K562 (cell line): ENCODE measurements at regions of chr16 and their contacts with region 1.

Region 1: GRCh38 chr16:9597967-9598730 is 506.7 kb downstream of the HAPSTR1 start:
- DNase-seq: peak; percentile 22 to 78 (median 54)
- ATAC-seq: peak; percentile 90
- H3K4me3 ChIP-seq: no peak overlapping the region
- H3K27ac ChIP-seq: peak overlapping the region; percentile 88
- H3K4me1 ChIP-seq: peaks cover 4 to 56% of the 10 kb centered on the region in 2 experiments; a peak in 4 of 5 replicates
- H3K27me3 ChIP-seq: no peaks in the 10 kb centered on the region
- CTCF ChIP-seq: no peak
- EP300 ChIP-seq: peak; percentile 97
- POLR2A ChIP-seq: peak; percentile 42; the same call in 1 of the 2 replicates
- RAD21 ChIP-seq: peak; percentile 19 to 30; a peak in 2 of 4 replicates

Region 2: DNA sequence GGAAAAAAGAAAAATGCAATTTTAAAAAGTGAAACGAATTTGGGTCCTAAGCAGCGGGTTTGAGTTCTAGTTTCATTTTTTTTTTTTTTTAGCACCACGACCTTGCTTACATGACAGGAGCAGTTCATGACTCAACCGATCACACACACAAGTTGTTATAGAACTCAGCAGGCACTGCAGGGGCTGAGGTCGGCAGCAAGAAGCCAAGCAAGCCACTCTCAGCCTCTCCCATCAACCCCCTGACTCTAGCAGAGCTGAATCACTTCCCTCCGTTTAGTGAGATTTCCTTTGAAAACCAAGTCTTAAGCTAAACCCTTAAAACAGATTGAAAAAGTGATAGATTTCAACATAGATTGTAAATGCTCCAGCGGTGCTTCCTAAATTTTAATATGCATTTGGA is 14.1 kb after region 1 on chr16:
- CTCF ChIA-PET with region 1: no interaction called
- POLR2A ChIA-PET with region 1: interaction called, 15 read pairs
- in situ Hi-C with region 1: no loop called
- intact Hi-C with region 1: no loop called
- DNase-seq: no peak
- ATAC-seq: no peak
- H3K4me3 ChIP-seq: no peak overlapping the region
- H3K27ac ChIP-seq: no peak overlapping the region
- H3K4me1 ChIP-seq: no peaks in the 10 kb centered on the region
- H3K27me3 ChIP-seq: no peaks in the 10 kb centered on the region
- CTCF ChIP-seq: no peak
- EP300 ChIP-seq: no peak
- POLR2A ChIP-seq: no peak
- RAD21 ChIP-seq: no peak